ENCODE measurements at regions of chr13 and their contacts with region 1.

Region 1: DNA sequence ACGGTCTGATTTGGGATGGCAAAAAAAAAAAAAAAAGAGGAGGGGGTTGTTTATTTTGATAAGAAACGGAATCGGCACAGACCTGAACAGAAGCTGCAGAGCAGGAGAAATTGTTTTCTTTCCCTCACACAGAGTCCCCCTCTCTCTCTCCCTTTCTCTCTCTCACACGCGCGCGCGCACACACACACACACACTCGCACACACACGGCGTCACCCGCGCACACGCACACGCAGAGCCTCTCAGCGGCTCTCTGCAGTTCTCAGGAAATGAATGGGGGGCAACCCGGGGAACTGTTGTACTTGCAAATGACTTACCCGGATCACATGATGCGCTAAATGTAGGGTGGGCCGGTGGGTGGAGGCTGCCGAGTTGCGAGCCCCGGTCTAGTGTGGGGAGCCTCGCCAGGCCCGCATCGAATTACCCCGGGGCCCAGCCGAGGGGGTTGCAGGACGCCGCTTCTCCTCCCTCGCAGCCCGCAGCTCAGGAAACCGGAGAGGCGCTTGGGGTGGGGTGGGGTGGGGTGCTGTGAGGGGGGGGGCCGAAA is 475 bp downstream of the KLF12 start:
- DNase-seq: peak; percentile 87

Region 2: DNA sequence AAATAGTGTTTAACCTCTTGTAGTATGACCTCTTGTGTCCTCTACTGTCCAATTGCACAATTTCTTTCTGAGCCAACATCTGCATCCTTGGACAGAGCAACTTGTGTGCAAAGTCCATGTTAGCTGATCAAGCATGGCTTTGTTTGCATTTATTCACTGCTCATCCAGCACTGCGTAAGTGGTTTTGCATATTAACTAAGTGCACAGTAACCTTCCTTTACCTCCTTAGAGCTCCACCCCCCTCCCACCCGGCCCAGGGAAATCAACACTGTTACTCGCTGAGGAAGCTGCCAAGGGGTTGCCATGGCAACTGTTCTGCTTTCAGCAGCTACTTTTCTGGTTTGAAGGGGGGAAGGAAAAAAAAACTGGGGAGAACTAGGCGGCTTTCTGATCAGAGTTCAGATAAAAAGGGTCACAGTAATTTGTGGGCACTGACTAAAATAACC is 154.0 kb after region 1 on chr13:
- CTCF ChIA-PET with region 1: interaction called, 5 read pairs
- POLR2A ChIA-PET with region 1: interaction called, 12 read pairs
- DNase-seq: peak; percentile 74

Region 3: GRCh38 chr13:74325106-74325505 is 191.4 kb after region 1 on chr13:
- CTCF ChIA-PET with region 1: no interaction called
- POLR2A ChIA-PET with region 1: interaction called, 17 read pairs
- DNase-seq: peak; percentile 75

Measured in HEK293T (cell line).